Posterior vena cava (tissue), 2 donors: ENCODE measurements at regions of chr18 and their contacts with region 1.

Region 1: DNA sequence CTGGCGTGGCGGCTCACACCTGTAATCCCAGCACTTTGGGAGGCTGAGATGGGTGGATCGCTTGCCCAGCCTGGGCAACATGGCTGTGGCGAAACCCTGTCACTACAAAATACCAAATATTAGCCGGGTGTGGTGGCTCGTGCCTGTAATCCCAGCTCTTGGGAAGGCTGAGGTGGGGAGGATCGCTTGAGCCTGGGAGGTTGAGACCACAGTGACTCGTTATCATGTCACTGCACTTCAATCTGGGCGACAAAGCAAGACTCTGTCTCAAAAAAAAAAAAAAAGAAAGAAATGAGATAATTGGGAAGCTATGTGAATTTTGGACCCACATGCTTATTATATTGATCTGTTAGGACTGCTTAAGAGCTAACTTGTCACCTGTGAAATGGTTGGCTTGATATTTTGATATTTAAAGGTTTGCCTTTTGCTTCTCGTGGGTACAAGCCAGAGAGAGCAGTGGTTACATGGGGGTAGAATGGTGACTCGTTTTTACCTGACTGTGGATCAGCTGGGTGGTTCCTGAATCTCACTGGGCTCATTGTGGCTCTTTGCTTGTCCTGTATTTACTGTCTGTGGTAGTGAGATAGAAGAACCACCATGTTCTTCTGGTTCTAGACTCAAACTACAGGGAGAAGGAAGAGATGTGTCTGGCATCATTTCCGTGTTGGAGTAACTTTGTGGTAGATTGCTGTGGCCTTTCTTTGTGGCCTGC is 28.9 kb downstream of the ZNF532 start:
- DNase-seq: no peak

Region 2: GRCh38 chr18:58831606-58832005 is 61.9 kb before region 1 on chr18:
- intact Hi-C with region 1: loop called in 1 of 2 experiments (anchors 2 kb)
- DNase-seq: no peak

Region 3: GRCh38 chr18:59279722-59280121 is 386.2 kb after region 1 on chr18:
- intact Hi-C with region 1: loop called in 1 of 2 experiments (anchors 5 kb)
- DNase-seq: no peak